MCF 10A (cell line): ENCODE measurements at regions of chr14 and their contacts with region 1.

Region 1: DNA sequence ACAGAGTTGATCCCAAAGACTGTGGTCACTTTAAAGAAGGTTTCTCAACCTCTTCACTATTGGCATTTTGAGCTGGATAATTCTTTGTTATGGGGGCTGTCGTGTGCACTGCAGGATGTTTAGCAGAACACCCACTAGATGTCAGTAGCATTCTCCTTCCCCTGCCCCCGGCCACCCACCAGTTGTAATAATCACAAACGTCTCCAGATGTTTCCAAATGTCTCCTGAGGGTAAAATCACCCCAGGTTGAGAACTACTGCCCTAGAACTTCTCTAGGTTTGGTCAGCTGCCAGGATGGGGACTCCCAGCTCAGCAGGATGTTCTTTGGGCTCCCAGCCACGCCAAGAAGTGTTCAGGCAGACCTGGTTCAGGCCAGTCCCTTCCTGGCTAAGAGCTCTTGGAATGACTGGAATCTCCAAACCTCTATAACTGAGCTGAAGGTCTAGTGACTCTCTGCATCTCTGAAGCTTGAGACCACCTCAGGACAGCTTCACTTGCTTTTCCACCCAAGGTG is 12.5 kb upstream of the AJUBA start:
- DNase-seq: peak; percentile 84
- H3K4me3 Mint-ChIP-seq: no peak overlapping the region
- H3K27ac Mint-ChIP-seq: no peak overlapping the region
- H3K4me1 Mint-ChIP-seq: peaks cover 16% of the 10 kb centered on the region
- H3K27me3 Mint-ChIP-seq: no peaks in the 10 kb centered on the region
- CTCF ChIP-seq: peak; percentile 44

Region 2: DNA sequence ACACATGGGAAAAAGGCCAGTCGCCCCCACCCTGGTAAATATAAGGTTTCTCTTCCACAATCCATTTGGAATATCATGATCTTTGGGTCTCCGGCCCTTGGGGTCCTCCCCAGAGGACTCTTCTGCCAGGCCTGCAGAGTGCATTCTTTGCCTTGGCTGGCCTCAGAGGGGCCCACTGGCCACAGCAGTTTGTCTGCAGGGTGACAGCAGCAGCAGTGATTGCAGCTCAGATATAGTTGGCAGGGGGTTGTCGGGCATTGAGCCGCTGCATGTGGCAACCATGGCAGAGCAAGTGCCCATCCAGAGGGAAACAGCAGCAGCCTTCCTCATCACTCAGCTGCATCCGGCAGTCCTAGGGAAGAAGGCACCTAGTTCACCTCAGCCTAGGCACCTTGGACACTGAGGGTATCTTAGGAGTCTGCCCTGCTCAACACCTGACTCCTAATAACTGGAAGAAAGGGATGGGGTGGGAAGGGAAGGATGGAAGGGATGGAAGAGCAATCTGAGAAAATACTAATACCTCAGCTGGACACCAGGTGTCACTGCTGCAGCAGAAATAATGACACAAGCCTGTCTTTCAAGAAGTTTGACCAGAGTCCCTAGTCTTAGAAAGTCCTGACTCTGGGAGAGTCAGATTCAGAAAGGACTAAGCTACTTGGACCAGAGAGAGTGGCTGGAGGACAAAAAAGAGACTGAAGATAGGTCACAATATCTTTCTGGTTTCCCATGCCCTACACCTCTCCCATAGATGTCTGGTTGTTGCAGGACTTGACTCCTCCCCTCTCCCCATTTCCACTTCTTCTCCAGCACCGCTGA is 21.4 kb before region 1 on chr14:
- CTCF ChIA-PET with region 1: interaction called, 23 read pairs
- POLR2A ChIA-PET with region 1: interaction called, 5 read pairs
- intact Hi-C with region 1: no loop called
- DNase-seq: peak; percentile 78
- H3K4me3 Mint-ChIP-seq: peak overlapping the region; percentile 50
- H3K27ac Mint-ChIP-seq: peak overlapping the region; percentile 51
- H3K4me1 Mint-ChIP-seq: peaks cover 51% of the 10 kb centered on the region
- H3K27me3 Mint-ChIP-seq: no peaks in the 10 kb centered on the region
- CTCF ChIP-seq: peak; percentile 65

Region 3: DNA sequence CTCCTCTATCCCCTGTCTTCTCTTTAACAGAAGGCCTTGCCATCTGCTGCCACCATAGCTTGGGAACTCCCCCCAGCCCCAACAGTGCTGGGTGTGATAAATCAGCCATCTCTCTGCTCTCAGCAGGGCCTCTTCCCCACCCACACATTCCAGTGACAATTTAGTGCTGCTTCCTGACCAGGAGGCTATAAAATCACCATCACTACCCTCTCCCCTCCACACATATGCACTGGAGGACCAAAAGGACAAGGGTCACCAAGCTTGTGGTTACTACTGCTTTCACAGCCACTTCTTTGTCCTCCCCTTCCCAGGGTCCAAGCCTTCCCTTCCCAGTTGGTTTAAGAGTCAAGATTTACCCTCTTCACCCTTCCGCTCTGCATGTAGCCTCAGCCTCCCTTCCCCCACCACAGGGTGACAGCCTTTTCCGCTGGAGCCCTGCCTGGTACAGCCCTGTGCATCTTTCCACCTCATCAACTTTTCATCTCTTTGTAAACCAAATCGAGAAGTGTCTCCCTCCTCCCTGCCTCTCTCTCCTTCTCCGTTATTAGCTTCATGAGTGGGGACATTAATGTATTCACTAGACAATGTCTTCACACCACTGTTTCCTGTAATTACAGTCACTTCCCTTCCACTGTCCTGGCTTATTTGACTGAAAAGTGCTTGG is 30.5 kb after region 1 on chr14:
- CTCF ChIA-PET with region 1: interaction called, 11 read pairs
- POLR2A ChIA-PET with region 1: interaction called, 4 read pairs
- intact Hi-C with region 1: no loop called
- DNase-seq: no peak
- H3K4me3 Mint-ChIP-seq: no peak overlapping the region
- H3K27ac Mint-ChIP-seq: no peak overlapping the region
- H3K4me1 Mint-ChIP-seq: peaks cover 10% of the 10 kb centered on the region
- H3K27me3 Mint-ChIP-seq: no peaks in the 10 kb centered on the region
- CTCF ChIP-seq: no peak

Region 4: GRCh38 chr14:24398653-24399446 is 1404.0 kb after region 1 on chr14 and contains the start of gene NYNRIN:
- CTCF ChIA-PET with region 1: no interaction called
- POLR2A ChIA-PET with region 1: no interaction called
- intact Hi-C with region 1: no loop called
- DNase-seq: no peak
- H3K4me3 Mint-ChIP-seq: peak within 1 kb of the TSS; percentile 17
- H3K27ac Mint-ChIP-seq: no peak within 1 kb of the TSS
- H3K4me1 Mint-ChIP-seq: peaks cover 32% of the 10 kb centered on the region
- H3K27me3 Mint-ChIP-seq: no peaks in the 10 kb centered on the region
- CTCF ChIP-seq: no peak
- total RNA-seq, gene NYNRIN: not detected in 2 replicates